ENCODE measurements at regions of chr17 and their contacts with region 1.

Region 1: DNA sequence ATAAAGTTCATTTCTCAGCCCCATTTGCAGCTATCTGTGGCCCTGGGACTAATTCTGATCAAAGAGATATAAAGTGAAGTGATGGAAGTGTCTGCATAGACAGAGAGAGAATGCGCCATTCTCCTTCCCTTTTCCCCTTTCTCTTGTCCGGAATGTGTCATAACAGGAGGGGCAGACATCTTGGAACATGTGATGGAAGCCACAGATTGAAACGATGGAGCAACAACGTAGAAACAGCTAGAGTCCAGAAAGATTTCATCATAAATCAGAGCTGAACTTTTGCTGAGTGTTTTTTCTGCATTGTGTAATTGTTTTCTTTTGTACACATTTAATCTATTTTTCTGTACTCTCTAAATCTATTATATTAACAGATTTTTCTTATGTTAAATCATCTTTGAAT is 11.3 kb downstream of the ASGR1 start:
- DNase-seq: no peak
- ATAC-seq: no peak
- H3K4me3 Mint-ChIP-seq: no peak overlapping the region
- H3K27ac Mint-ChIP-seq: no peak overlapping the region
- H3K4me1 Mint-ChIP-seq: peaks cover 0 to 6% (median 0%) of the 10 kb centered on the region in 4 donors
- H3K27me3 Mint-ChIP-seq: peaks cover 0 to 9% (median under 1%) of the 10 kb centered on the region in 5 donors

Region 2: DNA sequence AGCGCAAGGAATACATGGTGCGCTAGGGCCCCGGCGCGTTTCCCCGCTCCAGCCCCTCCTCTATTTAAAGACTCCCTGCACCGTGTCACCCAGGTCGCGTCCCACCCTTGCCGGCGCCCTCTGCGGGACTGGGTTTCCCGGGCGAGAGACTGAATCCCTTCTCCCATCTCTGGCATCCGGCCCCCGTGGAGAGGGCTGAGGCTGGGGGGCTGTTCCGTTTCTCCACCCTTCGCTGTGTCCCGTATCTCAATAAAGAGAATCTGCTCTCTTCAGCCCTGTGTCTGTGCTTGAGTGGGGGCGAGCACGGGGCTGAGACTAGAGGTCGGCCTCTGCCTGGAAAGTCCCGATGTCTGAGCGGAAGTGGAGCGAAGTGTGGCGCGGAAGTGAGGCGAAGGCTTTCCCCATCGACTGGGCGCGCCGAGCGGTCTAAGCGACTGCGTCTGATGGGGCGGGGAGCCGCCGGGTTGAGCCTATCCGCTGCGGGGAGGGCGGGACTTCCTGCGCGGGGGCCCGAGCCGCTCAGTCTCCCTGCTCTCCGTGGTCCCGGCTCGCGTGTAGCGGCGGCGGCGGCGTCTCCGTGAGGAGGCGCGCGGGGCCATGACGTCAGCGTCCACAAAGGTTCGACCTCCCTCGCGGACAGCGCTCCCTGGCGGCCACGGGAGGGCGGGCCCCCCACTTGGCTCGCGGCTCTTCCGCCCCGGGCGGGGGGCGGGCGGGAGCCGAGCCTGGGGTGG is 153.4 kb before region 1 on chr17:
- POLR2A ChIA-PET with region 1: interaction called, 10 read pairs
- DNase-seq: peak; percentile 93 to 98 (median 96)
- ATAC-seq: peak; percentile 80 to 82
- H3K4me3 Mint-ChIP-seq: peak overlapping the region; percentile 88 to 99 (median 96)
- H3K27ac Mint-ChIP-seq: peak overlapping the region; percentile 98 to 100 (median 100)
- H3K4me1 Mint-ChIP-seq: peaks cover 32 to 89% (median 76%) of the 10 kb centered on the region in 4 donors
- H3K27me3 Mint-ChIP-seq: no peaks in the 10 kb centered on the region

Region 3: DNA sequence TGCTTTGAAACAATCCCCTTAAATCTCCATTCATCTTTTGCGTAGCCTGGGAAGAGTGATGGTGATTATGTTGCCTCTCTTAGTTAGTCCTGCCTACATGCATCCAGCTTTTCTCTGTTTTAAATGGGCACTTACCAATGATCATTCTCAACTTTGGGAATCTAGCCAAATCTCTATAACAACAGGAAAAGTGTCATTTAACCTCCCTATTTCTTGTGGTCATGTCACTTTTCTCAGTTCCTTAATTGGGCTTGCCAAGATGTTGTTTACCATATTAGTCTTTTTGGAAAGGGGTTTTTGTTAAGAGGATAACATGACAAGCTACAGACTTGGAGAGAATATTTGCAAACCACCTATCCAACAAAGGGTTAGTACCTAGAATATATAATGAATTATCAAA is 72.2 kb before region 1 on chr17:
- POLR2A ChIA-PET with region 1: no interaction called
- DNase-seq: no peak
- ATAC-seq: no peak
- H3K4me3 Mint-ChIP-seq: no peak overlapping the region
- H3K27ac Mint-ChIP-seq: no peak overlapping the region
- H3K4me1 Mint-ChIP-seq: peaks cover 4 to 32% (median 9%) of the 10 kb centered on the region in 4 donors
- H3K27me3 Mint-ChIP-seq: peaks cover 0 to 32% (median 5%) of the 10 kb centered on the region in 5 donors

Region 4: GRCh38 chr17:7204336-7204735 is 36.5 kb after region 1 on chr17:
- POLR2A ChIA-PET with region 1: no interaction called
- DNase-seq: peak in 4 of 10 donors; percentile 23 to 75 (median 30)
- ATAC-seq: no peak
- H3K4me3 Mint-ChIP-seq: peak overlapping the region; percentile 82 to 95 (median 90)
- H3K27ac Mint-ChIP-seq: peak overlapping the region; percentile 88 to 100 (median 99)
- H3K4me1 Mint-ChIP-seq: peaks cover 24 to 35% (median 33%) of the 10 kb centered on the region in 4 donors
- H3K27me3 Mint-ChIP-seq: no peaks in the 10 kb centered on the region

Measured in naive thymus-derived CD8-positive, alpha-beta T cell (primary cell).